ENCODE measurements at regions of chr15 and their contacts with region 1.

Region 1: GRCh38 chr15:73573572-73573971 is 59.6 kb downstream of the NPTN start:
- DNase-seq: peak; percentile 97
- ATAC-seq: peak; percentile 77
- H3K4me3 ChIP-seq: no peak overlapping the region
- H3K27ac ChIP-seq: peak overlapping the region; percentile 23; the same call in 1 of the 2 replicates
- H3K4me1 ChIP-seq: peaks cover 5% of the 10 kb centered on the region
- H3K27me3 ChIP-seq: no peaks in the 10 kb centered on the region
- CTCF ChIP-seq: no peak
- POLR2A ChIP-seq: no peak
- RAD21 ChIP-seq: no peak; the same call in 1 of the 2 replicates

Region 2: DNA sequence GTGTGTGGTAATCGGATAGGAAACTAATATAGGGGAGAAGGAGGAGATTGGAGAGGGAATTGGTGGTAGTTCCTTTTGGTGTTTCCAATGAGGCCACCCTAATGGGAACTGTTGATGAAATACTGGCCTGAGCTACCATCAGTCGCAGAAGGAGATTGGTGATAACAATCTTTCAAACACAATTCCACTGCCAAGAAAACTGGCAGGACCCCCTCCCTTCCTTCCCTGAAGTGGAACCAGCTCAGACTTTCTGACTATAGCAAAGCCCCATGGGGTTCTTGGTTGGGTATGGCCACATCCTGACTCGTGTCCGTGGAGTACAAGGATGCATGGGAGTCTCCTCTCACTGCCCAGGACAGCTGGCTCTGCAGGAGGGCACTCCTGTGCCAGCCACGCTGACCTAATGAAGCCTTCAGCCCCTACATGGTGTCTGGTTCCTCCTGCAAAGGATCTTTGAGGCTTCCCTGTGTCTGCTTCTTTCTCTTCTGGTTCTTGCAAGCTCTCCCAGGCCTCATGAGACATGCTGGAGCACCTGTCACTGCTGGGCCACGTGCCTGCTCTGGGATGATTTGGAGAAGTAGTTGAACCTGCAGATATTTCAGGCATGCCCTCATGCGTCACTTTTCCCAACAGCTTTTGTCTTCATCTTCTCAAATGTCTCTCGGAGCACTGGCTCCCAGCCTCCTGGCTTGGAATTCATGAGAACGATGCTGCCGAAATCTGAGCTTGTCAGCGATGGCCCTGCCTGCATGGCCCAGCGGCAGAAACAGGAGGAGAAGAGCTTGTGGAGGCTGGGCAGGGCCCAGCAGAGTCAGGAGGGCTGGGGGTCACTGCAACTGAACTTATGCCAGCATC is 700.0 kb before region 1 on chr15:
- CTCF ChIA-PET with region 1: no interaction called
- POLR2A ChIA-PET with region 1: no interaction called
- dilution Hi-C with region 1: no loop called
- in situ Hi-C with region 1: no loop called
- intact Hi-C with region 1: no loop called
- DNase-seq: no peak
- ATAC-seq: no peak
- H3K4me3 ChIP-seq: no peak overlapping the region
- H3K27ac ChIP-seq: no peak overlapping the region
- H3K4me1 ChIP-seq: no peaks in the 10 kb centered on the region
- H3K27me3 ChIP-seq: peaks cover 22% of the 10 kb centered on the region
- CTCF ChIP-seq: no peak
- POLR2A ChIP-seq: no peak
- RAD21 ChIP-seq: no peak

Region 3: DNA sequence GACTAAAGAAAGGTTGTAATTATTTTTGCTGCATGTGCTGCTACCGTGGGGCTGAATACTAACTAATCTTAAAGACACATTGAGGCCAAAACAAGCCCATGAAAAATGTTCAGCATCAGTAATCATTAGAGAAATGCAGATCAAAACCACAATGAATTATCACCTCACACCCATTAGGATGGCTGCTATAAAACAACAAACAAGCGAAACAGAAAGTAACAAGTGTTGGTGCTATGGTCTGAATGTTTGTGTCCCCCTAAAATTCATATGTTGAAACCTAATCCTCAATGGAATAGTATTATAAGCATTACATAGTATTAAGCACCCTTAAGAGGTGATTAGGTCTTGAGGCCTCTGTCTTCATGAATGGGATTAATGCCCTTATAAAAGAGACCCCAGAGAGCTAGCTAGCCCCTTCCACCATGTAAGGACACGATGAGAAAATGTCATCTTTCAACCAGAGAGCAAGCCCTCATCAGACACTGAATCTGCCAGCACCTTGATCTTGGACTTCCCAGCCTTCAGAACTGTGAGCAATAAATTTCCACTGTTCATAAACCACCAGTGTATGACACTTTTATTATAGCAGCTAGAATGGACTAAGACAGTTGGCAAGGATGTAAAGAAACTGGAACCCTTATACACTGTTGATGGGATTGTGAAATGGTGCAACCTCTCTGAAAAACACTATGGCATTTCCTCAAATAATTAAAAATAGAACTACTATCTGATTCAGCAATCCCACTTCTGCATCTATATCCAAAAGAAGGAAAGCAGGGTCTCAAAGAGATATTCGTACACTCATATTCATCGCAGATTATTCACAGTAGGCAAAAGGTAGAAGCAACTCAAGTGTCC is 54.5 kb before region 1 on chr15:
- CTCF ChIA-PET with region 1: no interaction called
- POLR2A ChIA-PET with region 1: no interaction called
- dilution Hi-C with region 1: no loop called
- in situ Hi-C with region 1: no loop called
- intact Hi-C with region 1: no loop called
- DNase-seq: no peak
- ATAC-seq: no peak
- H3K4me3 ChIP-seq: no peak overlapping the region
- H3K27ac ChIP-seq: no peak overlapping the region
- H3K4me1 ChIP-seq: no peaks in the 10 kb centered on the region
- H3K27me3 ChIP-seq: peaks cover 14% of the 10 kb centered on the region
- CTCF ChIP-seq: no peak
- POLR2A ChIP-seq: no peak
- RAD21 ChIP-seq: no peak

Region 4: DNA sequence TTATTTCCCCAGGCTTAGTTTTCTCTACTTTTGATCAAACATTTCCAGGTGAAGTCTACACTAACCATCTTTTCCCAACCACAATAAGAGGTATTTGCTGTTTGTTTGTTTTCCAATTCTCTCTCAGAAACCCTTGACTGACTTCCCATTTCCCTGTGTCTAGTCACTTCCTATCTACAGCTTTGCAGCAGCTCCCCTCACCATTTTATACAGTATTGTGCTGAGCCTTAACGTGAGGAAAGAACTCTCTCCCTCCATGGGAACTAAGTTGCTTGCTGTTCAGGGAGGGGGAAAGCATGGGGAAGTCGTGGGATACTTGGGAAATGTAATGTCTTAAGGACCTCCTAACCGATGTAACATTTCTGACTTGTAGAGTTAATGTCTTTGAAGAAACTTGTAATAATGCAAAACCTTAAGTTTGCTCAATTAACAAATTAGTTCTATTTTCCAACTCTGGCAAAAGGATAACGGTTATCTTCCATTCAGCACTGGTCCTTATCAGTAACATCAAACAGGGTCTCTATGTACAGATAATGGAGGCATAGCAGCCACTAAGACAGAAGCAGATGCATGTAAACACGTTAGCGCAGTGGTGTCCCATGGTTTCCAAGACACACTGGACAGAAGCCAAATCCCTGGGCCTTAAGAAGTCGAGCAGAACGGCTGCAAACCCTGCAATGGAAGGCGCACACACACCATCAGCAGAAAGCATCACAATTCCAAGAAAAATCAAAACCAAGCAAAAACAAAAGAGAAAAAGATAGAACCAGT is 19.9 kb after region 1 on chr15:
- CTCF ChIA-PET with region 1: no interaction called
- POLR2A ChIA-PET with region 1: no interaction called
- dilution Hi-C with region 1: no loop called
- in situ Hi-C with region 1: no loop called
- intact Hi-C with region 1: loop called (anchors 2 kb)
- DNase-seq: peak; percentile 46
- ATAC-seq: no peak
- H3K4me3 ChIP-seq: no peak overlapping the region
- H3K27ac ChIP-seq: no peak overlapping the region
- H3K4me1 ChIP-seq: peaks cover 10% of the 10 kb centered on the region
- H3K27me3 ChIP-seq: no peaks in the 10 kb centered on the region
- CTCF ChIP-seq: no peak
- POLR2A ChIP-seq: no peak
- RAD21 ChIP-seq: no peak

Region 5: DNA sequence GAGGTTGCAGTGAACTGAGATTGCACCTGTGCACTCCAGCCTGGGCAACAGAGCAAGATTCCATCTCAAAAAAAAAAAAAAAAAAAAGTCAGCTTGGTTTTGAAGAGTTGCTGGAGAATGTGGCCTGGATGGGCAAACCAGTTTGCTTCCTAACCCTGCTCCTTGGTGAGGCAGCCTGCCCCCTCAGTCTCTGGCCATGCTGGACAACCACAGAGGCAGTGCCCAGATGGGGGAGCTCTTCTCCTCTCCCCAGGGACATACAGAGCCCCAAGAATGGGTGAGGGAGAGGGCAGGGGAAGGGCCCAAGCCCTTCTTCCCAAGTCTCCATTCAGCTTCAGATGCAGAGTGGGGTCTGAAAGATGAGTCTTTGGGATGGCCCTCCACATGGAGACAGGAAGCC is 138.5 kb after region 1 on chr15:
- CTCF ChIA-PET with region 1: no interaction called
- POLR2A ChIA-PET with region 1: no interaction called
- dilution Hi-C with region 1: no loop called
- in situ Hi-C with region 1: no loop called
- intact Hi-C with region 1: no loop called
- DNase-seq: no peak
- ATAC-seq: peak; percentile 28; the same call in 1 of the 2 replicates
- H3K4me3 ChIP-seq: no peak overlapping the region
- H3K27ac ChIP-seq: no peak overlapping the region
- H3K4me1 ChIP-seq: no peaks in the 10 kb centered on the region
- H3K27me3 ChIP-seq: no peaks in the 10 kb centered on the region
- CTCF ChIP-seq: no peak
- POLR2A ChIP-seq: no peak
- RAD21 ChIP-seq: no peak

Measured in IMR-90 (cell line).